A549 (cell line): ENCODE measurements at regions of chr12 and their contacts with region 1.

Region 1: GRCh38 chr12:117850048-117850447 is 118.7 kb downstream of the KSR2 start:
- DNase-seq: peak; percentile 77 to 80
- ATAC-seq: peak; percentile 67 to 87
- H3K4me3 ChIP-seq: no peak overlapping the region
- H3K27ac ChIP-seq: peak overlapping the region; percentile 14 to 45; a peak in 3 of 6 replicates
- H3K4me1 ChIP-seq: peaks cover 12% of the 10 kb centered on the region
- CTCF ChIP-seq: peak; percentile 89
- EP300 ChIP-seq: no peak
- POLR2A ChIP-seq: no peak
- RAD21 ChIP-seq: peak; percentile 77 to 84

Region 2: DNA sequence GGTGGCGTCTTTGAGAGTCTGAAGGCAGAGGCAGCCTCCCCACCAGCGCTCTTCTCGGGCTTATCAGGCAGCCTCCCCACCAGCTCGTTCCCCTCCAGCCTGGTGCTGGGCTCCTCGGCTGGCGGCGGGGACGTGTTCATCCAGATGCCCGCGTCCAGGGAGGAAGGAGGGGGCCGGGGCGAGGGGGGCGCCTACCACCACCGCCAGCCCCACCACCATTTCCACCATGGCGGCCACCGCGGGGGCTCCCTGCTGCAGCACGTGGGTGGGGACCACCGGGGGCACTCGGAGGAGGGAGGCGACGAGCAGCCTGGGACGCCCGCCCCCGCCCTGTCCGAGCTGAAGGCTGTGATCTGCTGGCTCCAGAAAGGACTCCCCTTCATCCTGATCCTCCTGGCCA is 1100.2 kb before region 1 on chr12:
- CTCF ChIA-PET with region 1: no interaction called
- POLR2A ChIA-PET with region 1: no interaction called
- DNase-seq: no peak
- ATAC-seq: 0 out of 6 replicates have a peak, but pooled peaks of 1 of the 2 experiments have one; percentile 13
- H3K4me3 ChIP-seq: no peak overlapping the region
- H3K27ac ChIP-seq: no peak overlapping the region
- H3K4me1 ChIP-seq: no peaks in the 10 kb centered on the region
- CTCF ChIP-seq: no peak
- EP300 ChIP-seq: no peak
- POLR2A ChIP-seq: no peak
- RAD21 ChIP-seq: no peak

Region 3: DNA sequence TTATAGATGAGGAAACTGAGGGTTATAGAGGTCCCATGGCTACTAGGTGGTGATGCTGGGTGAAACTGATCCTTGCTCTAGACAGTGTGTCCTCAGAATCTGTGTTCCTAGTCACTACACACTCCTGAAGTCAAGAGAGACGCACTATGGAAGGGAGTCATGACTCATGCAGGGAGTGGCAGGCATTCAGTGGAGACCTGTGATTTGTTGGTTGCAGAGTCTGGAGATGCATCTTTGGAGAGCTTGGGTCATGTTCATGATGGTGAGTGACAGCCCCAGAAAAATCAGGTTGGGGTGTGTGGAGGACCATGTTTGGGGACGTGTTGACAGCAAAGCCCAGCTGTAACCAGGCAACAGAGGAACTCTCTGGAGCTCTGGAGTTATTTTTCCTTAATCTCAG is 621.8 kb before region 1 on chr12:
- CTCF ChIA-PET with region 1: interaction called, 10 read pairs
- POLR2A ChIA-PET with region 1: no interaction called
- DNase-seq: peak; percentile 61 to 72
- ATAC-seq: peak; percentile 82 to 86
- H3K4me3 ChIP-seq: no peak overlapping the region
- H3K27ac ChIP-seq: no peak overlapping the region
- H3K4me1 ChIP-seq: peaks cover 10% of the 10 kb centered on the region; the same call in 2 of the 3 replicates
- CTCF ChIP-seq: no peak
- EP300 ChIP-seq: no peak
- POLR2A ChIP-seq: no peak
- RAD21 ChIP-seq: no peak

Region 4: GRCh38 chr12:117587631-117588287 is 262.3 kb before region 1 on chr12:
- CTCF ChIA-PET with region 1: interaction called, 18 read pairs
- POLR2A ChIA-PET with region 1: no interaction called
- DNase-seq: peak; percentile 60 to 77
- ATAC-seq: peak; percentile 75 to 98; a peak in 5 of 6 replicates
- H3K4me3 ChIP-seq: no peak overlapping the region
- H3K27ac ChIP-seq: peak overlapping the region; percentile 44 to 65; a peak in 5 of 6 replicates
- H3K4me1 ChIP-seq: no peaks in the 10 kb centered on the region
- CTCF ChIP-seq: peak; percentile 89
- EP300 ChIP-seq: no peak
- POLR2A ChIP-seq: no peak
- RAD21 ChIP-seq: peak; percentile 92 to 94

Region 5: DNA sequence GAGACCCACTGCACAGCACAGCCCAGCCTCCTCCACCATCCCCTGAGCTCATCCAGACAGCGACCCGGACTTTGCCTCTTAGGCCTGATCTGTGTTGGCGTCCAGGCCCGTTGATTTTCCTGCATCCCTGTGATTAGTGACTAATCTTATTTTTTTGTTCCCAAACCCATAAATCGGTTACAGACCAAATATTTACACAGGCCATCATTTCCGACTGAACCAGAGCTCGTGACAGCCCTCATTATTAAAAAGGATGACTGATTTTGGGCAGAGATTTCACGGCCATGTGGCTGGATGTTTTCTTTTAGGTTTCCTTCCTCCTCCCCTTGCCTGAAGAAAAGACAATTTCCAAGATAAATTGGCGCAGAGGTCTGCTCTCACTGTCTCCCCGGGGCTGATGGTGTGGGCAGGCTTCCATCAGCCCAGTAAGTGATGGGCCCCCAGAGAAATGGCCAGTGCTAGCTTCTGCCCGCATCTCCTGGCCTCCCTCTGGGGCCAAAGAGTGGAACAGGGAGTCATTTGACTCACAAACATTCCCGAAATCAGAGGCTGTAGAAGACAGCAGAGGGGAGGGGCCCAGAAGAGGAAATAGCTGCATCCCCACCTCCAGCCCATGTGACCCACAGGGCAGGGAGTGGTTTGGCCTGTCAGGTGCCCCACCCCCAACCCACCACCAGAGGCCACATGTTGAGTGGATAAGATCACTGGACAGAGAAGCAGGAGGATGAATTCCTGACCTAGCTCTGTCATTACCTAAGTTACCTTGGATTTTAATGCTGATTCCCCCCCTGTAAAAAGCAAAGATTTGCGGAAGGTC is 164.7 kb before region 1 on chr12:
- CTCF ChIA-PET with region 1: interaction called, 17 read pairs
- POLR2A ChIA-PET with region 1: no interaction called
- DNase-seq: peak; percentile 95 to 96
- ATAC-seq: peak; percentile 88 to 91
- H3K4me3 ChIP-seq: no peak overlapping the region
- H3K27ac ChIP-seq: peak overlapping the region; percentile 94 to 96
- H3K4me1 ChIP-seq: peaks cover 69% of the 10 kb centered on the region
- CTCF ChIP-seq: no peak
- EP300 ChIP-seq: peak; percentile 72 to 85; a peak in 4 of 5 replicates
- POLR2A ChIP-seq: peak; percentile 16; the same call in 1 of the 2 replicates
- RAD21 ChIP-seq: peak; percentile 12 to 29; a peak in 3 of 5 replicates